ENCODE measurements at regions of chr15 and their contacts with region 1.

Region 1: GRCh38 chr15:75389791-75390382 is 21.5 kb upstream of the MAN2C1 start:
- DNase-seq: no peak
- H3K4me3 ChIP-seq: no peak overlapping the region
- H3K27ac ChIP-seq: no peak overlapping the region
- H3K4me1 ChIP-seq: no peaks in the 10 kb centered on the region
- H3K27me3 ChIP-seq: no peaks in the 10 kb centered on the region
- CTCF ChIP-seq: no peak
- EP300 ChIP-seq: no peak
- POLR2A ChIP-seq: no peak
- RAD21 ChIP-seq: no peak

Region 2: DNA sequence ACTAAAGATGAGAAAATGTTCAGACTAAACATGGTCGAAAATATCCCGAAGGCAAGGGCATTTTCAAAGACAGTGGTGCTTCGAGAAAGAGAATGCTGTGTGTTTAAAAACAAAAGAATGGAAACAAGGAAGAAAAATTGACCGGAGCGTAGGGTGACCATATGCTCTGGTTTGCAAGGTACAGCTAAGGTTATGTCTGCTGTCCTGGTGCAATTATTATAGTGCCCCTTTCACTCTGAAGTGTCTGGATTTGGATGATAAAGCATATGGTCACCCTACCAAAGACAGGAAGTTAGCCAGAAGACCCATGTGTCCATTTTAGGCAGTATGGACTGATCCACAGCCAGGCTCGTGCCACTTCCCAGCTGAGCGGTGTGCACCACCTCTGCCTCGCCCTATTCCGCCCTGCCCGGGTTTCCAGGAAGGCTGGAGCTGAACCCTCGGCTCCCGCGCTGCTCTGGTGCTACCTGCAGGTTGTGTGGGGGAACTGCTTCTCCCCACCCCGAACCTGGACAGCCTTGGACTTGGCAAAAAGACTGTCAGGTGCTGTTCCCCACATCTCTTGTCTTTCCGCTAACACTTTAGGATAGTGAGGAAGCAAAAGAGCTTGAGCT is 82.0 kb before region 1 on chr15:
- CTCF ChIA-PET with region 1: no interaction called
- POLR2A ChIA-PET with region 1: no interaction called
- DNase-seq: peak; percentile 60 to 88
- H3K4me3 ChIP-seq: no peak overlapping the region
- H3K27ac ChIP-seq: no peak overlapping the region
- H3K4me1 ChIP-seq: no peaks in the 10 kb centered on the region
- H3K27me3 ChIP-seq: no peaks in the 10 kb centered on the region
- CTCF ChIP-seq: peak; percentile 94 to 95 (median 95)
- EP300 ChIP-seq: no peak
- POLR2A ChIP-seq: no peak
- RAD21 ChIP-seq: peak; percentile 98 to 99

Region 3: GRCh38 chr15:75367913-75368688 is 21.8 kb before region 1 on chr15 and contains the start of gene MAN2C1:
- CTCF ChIA-PET with region 1: interaction called, 3 read pairs
- POLR2A ChIA-PET with region 1: interaction called, 14 read pairs
- DNase-seq: peak; percentile 94 to 96
- H3K4me3 ChIP-seq: peak within 1 kb of the TSS; percentile 59 to 85 (median 72)
- H3K27ac ChIP-seq: peak within 1 kb of the TSS; percentile 74
- H3K4me1 ChIP-seq: peaks cover 0 to 4% (median 1%) of the 10 kb centered on the region in 4 experiments; a peak in 4 of 7 replicates
- H3K27me3 ChIP-seq: no peaks in the 10 kb centered on the region
- CTCF ChIP-seq: peak; percentile 91 to 96 (median 93)
- EP300 ChIP-seq: peak; percentile 9 to 76; a peak in 2 of 3 replicates
- POLR2A ChIP-seq: peak; percentile 95 to 96
- RAD21 ChIP-seq: peak; percentile 52 to 65
- total RNA-seq, gene MAN2C1: 79.1 and 88.9 TPM in 2 replicates

Region 4: GRCh38 chr15:75460646-75461045 is 70.8 kb after region 1 on chr15:
- CTCF ChIA-PET with region 1: no interaction called
- POLR2A ChIA-PET with region 1: no interaction called
- DNase-seq: no peak
- H3K4me3 ChIP-seq: no peak overlapping the region
- H3K27ac ChIP-seq: no peak overlapping the region
- H3K4me1 ChIP-seq: peaks cover 2 to 16% (median 14%) of the 10 kb centered on the region in 4 experiments
- H3K27me3 ChIP-seq: no peaks in the 10 kb centered on the region
- CTCF ChIP-seq: no peak
- EP300 ChIP-seq: no peak
- POLR2A ChIP-seq: no peak
- RAD21 ChIP-seq: no peak

Measured in H1 (cell line).